B cell (primary cell): ENCODE measurements at regions of chr15 and their contacts with region 1.

Region 1: DNA sequence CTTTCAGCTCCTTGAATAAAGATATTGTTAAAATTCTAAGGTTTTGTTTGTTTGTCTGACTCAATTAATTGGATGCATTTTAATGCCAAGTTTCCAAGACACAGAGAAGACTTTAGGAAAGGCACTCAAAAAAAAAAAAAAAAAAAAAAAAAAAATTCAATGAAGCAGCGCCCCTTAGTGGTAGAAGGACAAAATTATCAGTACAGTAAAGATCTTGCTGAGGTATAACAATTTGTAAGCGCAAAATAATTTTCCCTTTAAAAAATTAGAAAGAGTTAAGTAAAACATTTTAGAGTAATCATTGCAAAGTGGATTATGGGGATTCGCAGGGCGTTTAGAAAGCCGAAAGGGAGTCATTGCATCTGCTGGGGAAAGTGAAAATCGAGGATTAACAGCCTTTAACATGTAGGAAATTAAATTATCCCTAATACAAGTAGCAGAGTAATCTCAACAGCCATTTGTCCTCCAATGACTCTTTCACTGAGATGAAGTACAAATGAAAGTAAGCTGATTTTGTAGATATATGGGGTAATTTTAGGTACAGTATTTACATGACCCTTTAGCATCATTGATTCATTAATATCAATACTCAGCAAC is 5.8 kb upstream of the DIS3L start:
- DNase-seq: peak; percentile 57
- ATAC-seq: peak; percentile 51
- H3K4me3 ChIP-seq: no peak overlapping the region
- H3K4me3 Mint-ChIP-seq: no peak overlapping the region
- H3K27ac ChIP-seq: no peak overlapping the region
- H3K27ac Mint-ChIP-seq: no peak overlapping the region
- H3K4me1 ChIP-seq: peaks cover 6 to 8% of the 10 kb centered on the region in 2 donors
- H3K4me1 Mint-ChIP-seq: peaks cover 22% of the 10 kb centered on the region
- H3K27me3 ChIP-seq: no peaks in the 10 kb centered on the region
- H3K27me3 Mint-ChIP-seq: no peaks in the 10 kb centered on the region
- CTCF ChIP-seq: peak; percentile 85

Region 2: DNA sequence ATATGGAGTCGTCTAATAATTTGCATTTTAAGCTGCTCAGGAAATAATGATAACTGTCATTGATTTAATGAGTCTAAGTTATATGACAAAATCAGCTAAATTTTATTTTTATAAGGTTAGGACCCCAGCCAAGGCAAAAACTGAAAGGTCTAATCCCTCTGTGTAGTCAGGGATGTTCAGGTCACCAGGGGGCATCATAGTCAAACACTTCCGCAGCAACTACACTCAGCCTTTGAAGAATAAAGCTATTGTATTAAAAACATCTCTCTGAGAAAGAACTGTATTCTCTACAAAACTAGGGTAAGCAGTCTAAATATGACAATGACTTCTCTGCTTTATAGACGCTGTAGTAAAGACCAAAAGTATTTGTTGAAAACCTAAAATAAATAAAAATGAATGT is 691.6 kb before region 1 on chr15:
- CTCF ChIA-PET with region 1: interaction called, 8 read pairs
- POLR2A ChIA-PET with region 1: no interaction called
- intact Hi-C with region 1: loop called (anchors 5 kb)
- DNase-seq: peak; percentile 38
- ATAC-seq: no peak
- H3K4me3 ChIP-seq: no peak overlapping the region
- H3K4me3 Mint-ChIP-seq: no peak overlapping the region
- H3K27ac ChIP-seq: no peak overlapping the region
- H3K27ac Mint-ChIP-seq: no peak overlapping the region
- H3K4me1 ChIP-seq: no peaks in the 10 kb centered on the region
- H3K4me1 Mint-ChIP-seq: no peaks in the 10 kb centered on the region
- H3K27me3 ChIP-seq: no peaks in the 10 kb centered on the region
- H3K27me3 Mint-ChIP-seq: no peaks in the 10 kb centered on the region
- CTCF ChIP-seq: peak; percentile 58

Region 3: GRCh38 chr15:66326051-66326450 is 38.5 kb after region 1 on chr15:
- CTCF ChIA-PET with region 1: no interaction called
- POLR2A ChIA-PET with region 1: no interaction called
- intact Hi-C with region 1: no loop called
- DNase-seq: no peak
- ATAC-seq: no peak
- H3K4me3 ChIP-seq: no peak overlapping the region
- H3K4me3 Mint-ChIP-seq: no peak overlapping the region
- H3K27ac ChIP-seq: no peak overlapping the region
- H3K27ac Mint-ChIP-seq: no peak overlapping the region
- H3K4me1 ChIP-seq: no peaks in the 10 kb centered on the region
- H3K4me1 Mint-ChIP-seq: no peaks in the 10 kb centered on the region
- H3K27me3 ChIP-seq: no peaks in the 10 kb centered on the region
- H3K27me3 Mint-ChIP-seq: no peaks in the 10 kb centered on the region
- CTCF ChIP-seq: no peak

Region 4: GRCh38 chr15:66417736-66418135 is 130.2 kb after region 1 on chr15:
- CTCF ChIA-PET with region 1: no interaction called
- POLR2A ChIA-PET with region 1: no interaction called
- intact Hi-C with region 1: no loop called
- DNase-seq: no peak
- ATAC-seq: no peak
- H3K4me3 ChIP-seq: no peak overlapping the region
- H3K4me3 Mint-ChIP-seq: no peak overlapping the region
- H3K27ac ChIP-seq: no peak overlapping the region
- H3K27ac Mint-ChIP-seq: no peak overlapping the region
- H3K4me1 ChIP-seq: peaks cover 0 to 7% of the 10 kb centered on the region in 2 donors
- H3K4me1 Mint-ChIP-seq: peaks cover 39% of the 10 kb centered on the region
- H3K27me3 ChIP-seq: no peaks in the 10 kb centered on the region
- H3K27me3 Mint-ChIP-seq: no peaks in the 10 kb centered on the region
- CTCF ChIP-seq: no peak